ENCODE measurements at regions of chr1 and their contacts with region 1.

Region 1: GRCh38 chr1:24847995-24848881 is 81.8 kb downstream of the RUNX3 start:
- DNase-seq: peak; percentile 94
- H3K4me3 ChIP-seq: peak overlapping the region; percentile 59
- H3K27ac ChIP-seq: peak overlapping the region; percentile 73
- H3K4me1 ChIP-seq: peaks cover 9% of the 10 kb centered on the region
- H3K27me3 ChIP-seq: no peaks in the 10 kb centered on the region
- CTCF ChIP-seq: peak; percentile 92

Region 2: DNA sequence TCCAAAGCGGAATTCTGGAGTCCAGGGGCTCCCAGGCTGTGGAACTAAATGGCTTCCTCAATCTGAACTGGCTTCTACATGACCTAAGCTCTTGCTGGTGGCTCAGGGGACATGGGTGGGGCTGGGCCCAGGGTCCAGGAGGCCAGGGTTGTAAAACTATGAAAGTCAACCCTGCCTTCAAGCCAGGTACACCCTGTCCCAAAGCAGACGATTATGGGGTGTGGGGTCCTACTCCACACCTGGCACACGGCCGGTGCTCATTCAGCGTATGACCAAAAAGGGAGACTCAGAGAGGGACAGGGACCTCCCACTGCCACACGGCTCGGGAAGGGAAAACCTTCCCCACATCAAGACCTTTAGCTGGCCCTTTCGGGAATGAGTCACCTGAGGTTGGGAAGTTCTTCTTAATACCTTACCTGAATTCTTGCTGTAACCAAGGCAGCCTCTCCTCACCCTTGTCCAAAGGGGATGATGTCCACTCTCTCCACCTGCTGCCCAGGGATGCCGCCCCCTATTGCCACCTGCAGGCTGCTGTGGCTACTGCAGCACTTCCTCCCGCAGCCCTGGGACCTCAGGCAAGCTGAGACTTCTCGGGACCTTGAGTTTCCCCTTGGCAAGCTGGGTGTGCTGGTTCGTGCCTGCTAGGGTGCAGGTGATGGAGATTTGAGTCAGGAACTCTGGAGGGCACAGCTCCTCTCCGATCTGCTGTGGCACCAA is 49.7 kb after region 1 on chr1:
- intact Hi-C with region 1: loop called (anchors 2 kb)
- DNase-seq: peak; percentile 66
- H3K4me3 ChIP-seq: no peak overlapping the region
- H3K27ac ChIP-seq: no peak overlapping the region
- H3K4me1 ChIP-seq: no peaks in the 10 kb centered on the region
- H3K27me3 ChIP-seq: no peaks in the 10 kb centered on the region
- CTCF ChIP-seq: peak; percentile 77

Region 3: DNA sequence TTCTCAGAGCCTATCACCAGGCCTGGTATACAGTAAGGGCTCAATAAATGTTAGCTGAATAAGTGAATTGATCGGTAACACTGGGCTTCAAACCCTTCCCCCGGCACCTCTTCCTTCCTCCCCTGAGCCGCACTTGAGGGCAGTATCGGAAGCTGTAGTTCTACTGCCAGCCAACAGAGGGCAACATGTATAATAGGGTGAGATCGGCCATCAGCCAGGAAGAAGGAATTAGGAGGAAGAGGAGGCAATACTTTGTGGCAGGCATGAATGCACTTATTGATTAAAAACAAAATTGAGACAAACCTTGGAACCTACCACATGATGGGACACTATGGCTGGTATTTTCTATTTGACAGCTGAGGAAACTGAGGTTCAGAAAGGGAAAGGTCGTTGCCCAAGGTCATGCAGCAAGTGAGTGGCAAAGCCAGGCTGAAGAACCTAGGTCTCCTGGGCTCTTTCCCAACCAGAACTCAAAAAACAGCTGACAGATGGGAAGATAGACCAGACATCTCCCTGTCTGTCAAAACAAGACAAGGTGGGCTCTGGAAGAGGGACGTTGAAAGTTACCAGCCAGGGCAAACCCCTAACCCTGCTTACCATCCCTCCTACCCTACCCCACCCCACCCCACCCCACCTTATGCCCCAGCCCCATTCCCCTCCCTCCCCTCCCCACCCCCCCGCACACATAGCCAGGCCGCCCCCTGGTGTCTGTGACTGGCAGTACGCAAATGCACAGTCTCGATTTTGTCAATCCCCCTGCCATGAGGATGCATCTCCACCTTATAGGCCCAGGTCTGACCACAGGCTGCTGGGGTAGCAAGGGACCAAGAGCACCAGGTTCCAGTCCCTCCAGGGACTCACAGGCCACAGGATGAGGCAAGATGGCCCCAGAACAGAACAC is 189.2 kb after region 1 on chr1:
- intact Hi-C with region 1: loop called (anchors 2 kb)
- DNase-seq: peak; percentile 52
- H3K4me3 ChIP-seq: no peak overlapping the region
- H3K27ac ChIP-seq: no peak overlapping the region
- H3K4me1 ChIP-seq: no peaks in the 10 kb centered on the region
- H3K27me3 ChIP-seq: no peaks in the 10 kb centered on the region
- CTCF ChIP-seq: peak; percentile 62

Region 4: GRCh38 chr1:25103164-25103795 is 255.0 kb after region 1 on chr1:
- intact Hi-C with region 1: loop called (anchors 5 kb)
- DNase-seq: no peak
- H3K4me3 ChIP-seq: no peak overlapping the region
- H3K27ac ChIP-seq: no peak overlapping the region
- H3K4me1 ChIP-seq: no peaks in the 10 kb centered on the region
- H3K27me3 ChIP-seq: no peaks in the 10 kb centered on the region
- CTCF ChIP-seq: no peak

Region 5: GRCh38 chr1:25204797-25205480 is 356.7 kb after region 1 on chr1:
- intact Hi-C with region 1: loop called (anchors 5 kb)
- DNase-seq: no peak
- H3K4me3 ChIP-seq: no peak overlapping the region
- H3K27ac ChIP-seq: no peak overlapping the region
- H3K4me1 ChIP-seq: no peaks in the 10 kb centered on the region
- H3K27me3 ChIP-seq: no peaks in the 10 kb centered on the region
- CTCF ChIP-seq: peak; percentile 79